Heart right ventricle (tissue), 16 donors: ENCODE measurements at regions of chr7 and their contacts with region 1.

Region 1: DNA sequence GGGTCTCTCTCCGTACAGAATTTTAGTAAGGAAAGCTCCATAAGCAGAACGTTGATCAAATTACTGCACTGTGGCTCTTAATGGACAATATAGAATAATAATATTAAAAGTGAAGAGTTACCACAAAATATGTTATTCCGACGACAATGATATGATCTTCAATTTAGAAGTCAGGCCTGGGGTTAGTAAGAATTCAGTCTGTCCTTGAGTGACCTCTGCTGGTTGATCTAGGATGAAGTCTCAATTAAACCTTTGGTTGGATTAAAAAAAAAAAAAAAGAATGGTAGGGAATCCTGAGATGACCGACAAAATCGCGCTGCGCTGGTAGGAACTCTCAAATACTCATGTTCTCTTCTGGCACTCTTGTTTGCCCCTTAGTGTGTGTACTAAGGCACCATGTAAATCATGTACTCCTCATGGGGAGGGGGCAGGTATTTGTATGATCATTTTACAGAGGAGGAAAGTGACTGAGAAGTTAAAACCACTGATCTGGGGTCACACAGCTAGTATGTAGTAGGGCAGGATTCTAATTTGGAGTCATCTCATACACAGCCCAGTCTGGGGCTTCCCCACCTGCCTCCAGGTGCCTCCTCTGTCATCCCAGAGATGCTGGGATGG is 161.3 kb upstream of the NPVF start:
- DNase-seq: peak in 1 of 2 donors; percentile 21
- ATAC-seq: peak in 6 of 8 donors; percentile 34 to 50 (median 36)
- H3K4me3 ChIP-seq: no peak overlapping the region
- H3K27ac ChIP-seq: no peak overlapping the region
- H3K4me1 ChIP-seq: peaks cover 0 to 18% (median 4%) of the 10 kb centered on the region in 9 donors
- H3K27me3 ChIP-seq: peaks cover 0 to 5% (median 0%) of the 10 kb centered on the region in 7 donors
- CTCF ChIP-seq: peak; percentile 9 to 70 (median 51)

Region 2: GRCh38 chr7:23967949-23968599 is 1421.5 kb before region 1 on chr7:
- intact Hi-C with region 1: no loop called
- DNase-seq: no peak
- ATAC-seq: no peak
- H3K4me3 ChIP-seq: no peak overlapping the region
- H3K27ac ChIP-seq: no peak overlapping the region
- H3K4me1 ChIP-seq: no peaks in the 10 kb centered on the region
- H3K27me3 ChIP-seq: peaks cover 0 to 3% (median 0%) of the 10 kb centered on the region in 7 donors
- CTCF ChIP-seq: no peak

Region 3: DNA sequence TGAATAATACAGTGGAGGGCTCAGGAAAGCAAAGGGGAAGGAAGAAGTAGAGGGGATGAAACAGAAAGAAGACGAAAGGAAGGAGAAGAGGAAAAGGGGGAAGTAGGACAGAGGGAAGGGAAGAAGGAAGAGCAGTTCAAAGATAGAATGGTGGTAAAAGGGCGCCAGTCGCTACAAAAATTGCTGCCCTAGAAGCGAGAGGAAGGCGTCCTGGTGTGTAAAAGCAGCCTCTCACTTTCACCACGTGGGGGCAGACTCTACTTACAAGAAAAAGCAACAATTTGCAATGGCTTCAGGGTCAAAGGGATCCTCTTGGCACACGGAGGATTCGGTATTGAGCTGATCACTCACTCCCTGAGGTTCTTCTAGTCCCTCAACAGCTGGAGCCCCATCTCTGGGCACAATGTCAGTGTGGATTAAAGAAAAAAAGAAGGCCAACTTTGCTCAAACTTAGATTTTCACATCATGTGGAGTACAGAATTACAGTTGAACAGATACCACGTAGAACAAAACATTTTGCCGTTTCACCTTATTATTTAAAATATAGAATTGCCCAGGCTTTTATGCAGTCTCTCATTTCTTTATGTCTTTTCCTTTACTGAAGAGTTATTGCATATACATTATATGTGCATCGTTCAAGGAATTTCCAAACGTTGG is 129.9 kb before region 1 on chr7:
- intact Hi-C with region 1: loop called in 9 of 10 experiments (anchors 1 to 5 kb)
- DNase-seq: peak; percentile 16 to 63
- ATAC-seq: peak; percentile 60 to 85 (median 70)
- H3K4me3 ChIP-seq: no peak overlapping the region
- H3K27ac ChIP-seq: no peak overlapping the region
- H3K4me1 ChIP-seq: peaks cover 0 to 27% (median 0%) of the 10 kb centered on the region in 9 donors
- H3K27me3 ChIP-seq: peaks cover 0 to 4% (median 0%) of the 10 kb centered on the region in 7 donors
- CTCF ChIP-seq: peak; percentile 65 to 89 (median 83)

Region 4: GRCh38 chr7:25559581-25560367 is 170.2 kb after region 1 on chr7:
- intact Hi-C with region 1: loop called in 7 of 10 experiments (anchors 2 to 5 kb)
- DNase-seq: no peak
- ATAC-seq: no peak
- H3K4me3 ChIP-seq: no peak overlapping the region
- H3K27ac ChIP-seq: no peak overlapping the region
- H3K4me1 ChIP-seq: peaks cover 0 to 8% (median 0%) of the 10 kb centered on the region in 9 donors
- H3K27me3 ChIP-seq: peaks cover 0 to 16% (median 4%) of the 10 kb centered on the region in 7 donors
- CTCF ChIP-seq: no peak

Region 5: DNA sequence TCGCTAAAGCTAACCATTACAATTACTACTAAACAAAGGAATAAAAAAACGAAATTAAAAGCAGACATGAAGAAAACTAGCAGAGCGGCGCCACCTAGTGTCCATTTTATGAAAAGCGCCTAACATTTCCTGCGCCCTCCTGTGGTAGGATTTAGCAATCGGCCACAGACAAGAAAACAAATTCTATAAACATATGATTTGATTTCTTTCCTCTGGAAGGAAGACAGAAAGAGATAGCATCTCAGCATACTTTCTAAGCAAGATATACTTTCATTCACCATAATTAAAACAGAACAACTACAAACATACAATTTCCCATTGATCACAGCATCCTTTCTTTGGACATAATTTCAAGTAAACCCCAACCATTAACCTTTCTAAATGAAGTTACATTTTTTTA is 176.4 kb after region 1 on chr7:
- intact Hi-C with region 1: loop called (anchors 1 to 5 kb)
- DNase-seq: peak; percentile 33 to 36
- ATAC-seq: peak in 2 of 8 donors; percentile 27 to 43
- H3K4me3 ChIP-seq: no peak overlapping the region
- H3K27ac ChIP-seq: peak overlapping the region in 1 of 10 donors; percentile 3
- H3K4me1 ChIP-seq: peaks cover 0 to 9% (median 7%) of the 10 kb centered on the region in 9 donors
- H3K27me3 ChIP-seq: peaks cover 0 to 8% (median 0%) of the 10 kb centered on the region in 7 donors
- CTCF ChIP-seq: peak; percentile 98 to 100 (median 100)